PC-3 (cell line): ENCODE measurements at regions of chr6 and their contacts with region 1.

Region 1: GRCh38 chr6:12011276-12012076 is 636 bp upstream of the HIVEP1 start:
- DNase-seq: peak; percentile 93
- ATAC-seq: peak; percentile 62
- H3K4me3 ChIP-seq: peak overlapping the region; percentile 91
- H3K27ac ChIP-seq: peak overlapping the region; percentile 86
- H3K4me1 ChIP-seq: peaks cover 37% of the 10 kb centered on the region
- H3K27me3 ChIP-seq: no peaks in the 10 kb centered on the region
- CTCF ChIP-seq: no peak

Region 2: DNA sequence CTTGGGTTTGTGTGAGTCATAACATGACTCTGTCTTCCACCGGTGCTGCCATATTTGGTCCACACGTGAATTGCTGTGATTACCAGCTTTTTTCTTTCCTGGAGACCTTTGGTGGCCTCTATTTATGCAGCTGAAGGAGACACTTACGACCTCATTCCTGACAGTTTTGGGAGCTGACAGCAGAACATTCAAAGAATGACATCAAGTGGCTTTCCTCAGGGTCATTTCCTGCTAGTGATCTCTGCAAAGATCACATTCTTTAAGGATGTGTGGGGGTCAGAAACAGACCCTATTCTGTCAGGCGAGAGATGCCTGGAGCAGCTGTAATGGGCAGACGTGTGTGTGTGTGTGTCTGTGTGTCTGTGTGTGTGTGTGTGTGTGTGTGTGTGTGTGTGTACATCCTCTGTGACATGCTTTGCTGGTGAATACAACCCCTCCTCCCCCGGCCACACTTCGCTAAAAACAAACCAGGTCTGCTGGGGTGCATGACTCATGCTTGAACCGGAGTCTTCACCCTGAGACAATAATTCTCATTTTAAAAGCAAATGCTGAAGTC is 358.4 kb before region 1 on chr6:
- CTCF ChIA-PET with region 1: no interaction called
- POLR2A ChIA-PET with region 1: no interaction called
- intact Hi-C with region 1: loop called (anchors 2 kb)
- DNase-seq: peak; percentile 74
- ATAC-seq: peak; percentile 64
- H3K4me3 ChIP-seq: no peak overlapping the region
- H3K27ac ChIP-seq: no peak overlapping the region
- H3K4me1 ChIP-seq: peaks cover 37% of the 10 kb centered on the region
- H3K27me3 ChIP-seq: no peaks in the 10 kb centered on the region
- CTCF ChIP-seq: no peak

Region 3: DNA sequence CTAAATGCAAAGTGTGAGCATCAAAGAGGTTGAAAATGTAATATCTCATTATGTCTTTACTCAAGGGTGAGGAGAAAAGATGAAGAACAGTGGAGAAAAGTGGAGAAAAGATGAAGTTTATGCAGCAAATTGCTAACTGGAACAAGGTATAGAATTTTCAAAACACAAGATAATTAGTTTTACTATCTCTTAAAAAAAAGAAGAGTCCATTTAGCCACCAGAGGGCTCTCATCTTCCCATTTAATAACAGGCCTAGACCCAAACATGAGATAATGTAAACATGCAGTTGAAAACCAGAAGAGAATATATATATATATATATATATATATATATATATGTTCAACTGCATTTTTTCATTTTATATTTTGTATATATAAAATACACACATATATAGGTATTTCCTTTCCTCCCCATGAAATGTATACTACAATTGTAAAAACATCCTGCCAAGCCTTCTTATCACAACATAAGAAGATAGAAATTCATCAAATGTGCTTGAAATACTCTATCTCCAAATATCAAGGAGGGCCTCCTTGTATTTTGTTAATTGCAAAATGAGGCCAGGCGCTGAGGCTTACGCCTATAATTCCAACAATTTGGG is 311.3 kb before region 1 on chr6:
- CTCF ChIA-PET with region 1: no interaction called
- POLR2A ChIA-PET with region 1: no interaction called
- intact Hi-C with region 1: loop called (anchors 1 kb)
- DNase-seq: peak; percentile 74
- ATAC-seq: no peak
- H3K4me3 ChIP-seq: no peak overlapping the region
- H3K27ac ChIP-seq: no peak overlapping the region
- H3K4me1 ChIP-seq: peaks cover 15% of the 10 kb centered on the region
- H3K27me3 ChIP-seq: no peaks in the 10 kb centered on the region
- CTCF ChIP-seq: peak; percentile 59

Region 4: GRCh38 chr6:11770546-11771466 is 240.7 kb before region 1 on chr6:
- CTCF ChIA-PET with region 1: no interaction called
- POLR2A ChIA-PET with region 1: interaction called, 9 read pairs
- intact Hi-C with region 1: loop called (anchors 1 kb)
- DNase-seq: peak; percentile 98
- ATAC-seq: peak; percentile 83
- H3K4me3 ChIP-seq: peak overlapping the region; percentile 29; the same call in 1 of the 2 replicates
- H3K27ac ChIP-seq: peak overlapping the region; percentile 97
- H3K4me1 ChIP-seq: peaks cover 71% of the 10 kb centered on the region
- H3K27me3 ChIP-seq: no peaks in the 10 kb centered on the region
- CTCF ChIP-seq: no peak

Region 5: DNA sequence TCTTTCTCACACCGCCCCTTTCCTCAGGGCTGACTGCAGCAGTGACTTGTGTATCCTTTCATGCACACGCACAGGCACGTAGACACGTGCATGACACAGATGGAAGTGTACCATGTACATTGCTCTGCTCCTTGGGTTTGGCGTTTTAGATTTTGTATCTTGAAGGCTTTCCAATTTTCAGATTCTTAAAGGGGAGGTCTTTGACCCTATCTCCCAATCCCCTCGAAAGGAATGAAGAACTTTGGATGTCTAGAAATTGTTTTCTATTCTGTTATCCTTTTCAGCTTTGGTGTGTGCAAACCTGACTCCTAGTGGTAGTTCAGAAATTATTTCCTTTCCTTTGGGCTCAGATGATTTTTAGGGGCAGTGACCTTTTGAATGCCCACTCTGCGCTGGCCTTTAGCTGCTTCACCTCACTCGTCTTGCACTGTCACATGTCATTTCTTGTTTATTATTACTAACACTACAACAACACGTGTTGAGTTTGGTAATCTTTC is 63.6 kb after region 1 on chr6:
- CTCF ChIA-PET with region 1: interaction called, 11 read pairs
- POLR2A ChIA-PET with region 1: no interaction called
- intact Hi-C with region 1: no loop called
- DNase-seq: peak; percentile 10
- ATAC-seq: no peak
- H3K4me3 ChIP-seq: no peak overlapping the region
- H3K27ac ChIP-seq: no peak overlapping the region
- H3K4me1 ChIP-seq: peaks cover 27% of the 10 kb centered on the region
- H3K27me3 ChIP-seq: no peaks in the 10 kb centered on the region
- CTCF ChIP-seq: peak; percentile 62